ENCODE measurements at regions of chr12 and their contacts with region 1.

Region 1: GRCh38 chr12:401235-402028 is at the start of gene CCDC77:
- DNase-seq: peak; percentile 97
- H3K4me3 Mint-ChIP-seq: no peak within 1 kb of the TSS
- H3K27ac Mint-ChIP-seq: no peak within 1 kb of the TSS
- H3K4me1 Mint-ChIP-seq: no peaks in the 10 kb centered on the region
- H3K27me3 Mint-ChIP-seq: no peaks in the 10 kb centered on the region
- total RNA-seq, gene CCDC77: 14.4 to 14.7 TPM

Region 2: GRCh38 chr12:219891-220352 is 181.5 kb before region 1 on chr12:
- CTCF ChIA-PET with region 1: no interaction called
- POLR2A ChIA-PET with region 1: no interaction called
- intact Hi-C with region 1: no loop called
- DNase-seq: peak; percentile 87
- H3K4me3 Mint-ChIP-seq: no peak overlapping the region
- H3K27ac Mint-ChIP-seq: no peak overlapping the region
- H3K4me1 Mint-ChIP-seq: no peaks in the 10 kb centered on the region
- H3K27me3 Mint-ChIP-seq: peaks cover 2% of the 10 kb centered on the region

Region 3: DNA sequence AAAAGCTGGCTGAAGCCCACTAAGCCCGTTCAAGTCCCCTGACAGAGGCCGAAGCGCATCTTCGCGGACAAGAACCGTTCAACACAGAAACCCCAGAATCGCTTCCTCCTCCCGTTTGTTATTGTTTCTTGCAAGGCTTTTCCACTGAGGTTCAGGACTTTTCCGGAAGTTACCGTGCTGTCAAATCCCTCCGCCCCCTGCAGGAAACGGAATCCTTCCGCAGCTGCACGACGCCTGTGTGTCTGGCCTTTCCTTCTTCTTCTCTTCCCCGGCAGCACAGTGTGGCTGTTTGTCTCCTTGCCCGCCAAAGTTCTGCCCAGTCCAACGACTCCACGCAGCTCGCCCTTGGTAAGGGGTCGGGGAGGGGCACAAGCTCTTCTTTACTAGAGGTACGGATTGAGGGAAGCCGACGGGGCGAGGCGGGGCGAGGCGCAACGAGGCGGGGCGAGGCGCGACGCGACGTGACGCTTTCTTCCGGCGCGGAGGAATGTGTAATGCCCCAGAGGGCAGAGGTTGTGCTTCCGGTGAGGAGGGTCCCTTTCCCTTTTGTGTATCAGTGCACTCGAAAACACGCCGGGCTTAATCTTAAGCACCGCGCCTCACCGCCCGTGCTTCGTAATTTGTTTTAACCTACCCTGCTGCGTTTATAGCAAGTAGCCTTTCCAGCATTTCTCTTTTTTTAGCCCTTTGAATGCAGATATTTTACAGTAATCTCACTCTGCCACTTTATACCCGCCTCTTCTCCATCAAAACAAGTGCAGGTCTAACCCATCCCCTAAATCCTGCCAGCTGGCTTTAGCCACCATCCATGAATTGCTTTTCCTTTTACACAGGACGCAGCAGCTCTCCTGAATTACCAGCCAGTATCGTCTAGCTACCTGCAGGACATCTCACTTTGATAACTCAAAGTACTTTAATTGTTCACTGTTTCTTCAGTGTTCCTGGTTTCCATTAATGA is 12.0 kb before region 1 on chr12 and contains the start of gene KDM5A:
- CTCF ChIA-PET with region 1: interaction called, 38 read pairs
- POLR2A ChIA-PET with region 1: interaction called, 31 read pairs
- intact Hi-C with region 1: loop called (anchors 1 kb)
- DNase-seq: peak; percentile 95
- H3K4me3 Mint-ChIP-seq: peak within 1 kb of the TSS; percentile 88
- H3K27ac Mint-ChIP-seq: peak within 1 kb of the TSS; percentile 96
- H3K4me1 Mint-ChIP-seq: peaks cover 27% of the 10 kb centered on the region
- H3K27me3 Mint-ChIP-seq: peaks cover 4% of the 10 kb centered on the region
- total RNA-seq, gene KDM5A: 59.7 to 63.5 TPM